Activated CD4-positive, alpha-beta T cell treated with anti-CD3 and anti-CD28 coated beads for 36 hours (primary cell): ENCODE measurements at regions of chr14 and their contacts with region 1.

Region 1: GRCh38 chr14:20413045-20413799 is at the start of gene TEP1:
- DNase-seq: peak; percentile 87
- ATAC-seq: peak; percentile 82
- H3K4me3 Mint-ChIP-seq: peak within 1 kb of the TSS; percentile 82
- H3K27ac Mint-ChIP-seq: peak within 1 kb of the TSS; percentile 94
- H3K4me1 Mint-ChIP-seq: peaks cover 37% of the 10 kb centered on the region
- H3K27me3 Mint-ChIP-seq: no peaks in the 10 kb centered on the region
- total RNA-seq, gene TEP1: 29.2 to 40.1 TPM

Region 2: DNA sequence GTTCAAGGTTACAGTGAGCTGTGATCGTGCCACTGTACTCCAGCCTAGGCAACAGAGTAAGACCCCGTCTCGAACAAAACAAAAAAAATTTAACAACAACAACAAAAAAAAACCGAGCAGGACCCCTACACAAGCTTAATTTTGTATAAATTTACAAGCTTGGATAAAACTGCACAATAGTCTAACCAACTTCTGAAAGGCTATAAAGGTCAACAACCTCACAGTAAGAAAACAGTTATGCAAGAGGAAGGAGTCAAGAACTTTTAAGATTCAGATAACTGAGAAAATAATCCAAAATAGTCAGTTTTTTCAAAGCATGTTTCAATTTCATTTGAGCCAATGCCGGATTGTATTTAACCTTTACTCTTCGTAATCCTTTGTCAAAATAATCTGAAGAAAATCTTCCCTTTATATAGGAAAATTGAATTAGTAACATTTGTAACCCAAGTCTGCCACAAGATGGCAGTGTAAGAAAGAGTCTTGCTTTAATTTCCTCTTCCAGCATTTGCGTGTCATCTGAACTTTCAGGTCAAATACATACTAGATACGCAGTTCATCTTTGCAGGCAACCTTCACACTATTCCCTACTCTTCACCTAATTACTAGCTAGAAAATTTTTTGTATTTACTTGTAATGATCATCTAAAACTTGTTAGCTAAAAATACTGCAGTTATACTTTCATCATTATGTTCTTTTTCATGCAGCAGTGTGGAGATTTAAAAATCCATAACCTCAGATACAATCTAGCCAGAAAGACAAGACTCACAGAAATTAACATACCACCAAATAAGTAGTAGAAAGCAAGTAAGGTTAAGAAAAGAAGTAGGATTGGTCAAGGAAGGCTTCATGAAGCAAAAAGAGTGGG is 86.0 kb before region 1 on chr14:
- CTCF ChIA-PET with region 1: interaction called, 19 read pairs
- POLR2A ChIA-PET with region 1: no interaction called
- intact Hi-C with region 1: loop called (anchors 1 to 2 kb)
- DNase-seq: no peak
- ATAC-seq: peak; percentile 71
- H3K4me3 Mint-ChIP-seq: no peak overlapping the region
- H3K27ac Mint-ChIP-seq: peak overlapping the region; percentile 44
- H3K4me1 Mint-ChIP-seq: peaks cover 37% of the 10 kb centered on the region
- H3K27me3 Mint-ChIP-seq: no peaks in the 10 kb centered on the region

Region 3: DNA sequence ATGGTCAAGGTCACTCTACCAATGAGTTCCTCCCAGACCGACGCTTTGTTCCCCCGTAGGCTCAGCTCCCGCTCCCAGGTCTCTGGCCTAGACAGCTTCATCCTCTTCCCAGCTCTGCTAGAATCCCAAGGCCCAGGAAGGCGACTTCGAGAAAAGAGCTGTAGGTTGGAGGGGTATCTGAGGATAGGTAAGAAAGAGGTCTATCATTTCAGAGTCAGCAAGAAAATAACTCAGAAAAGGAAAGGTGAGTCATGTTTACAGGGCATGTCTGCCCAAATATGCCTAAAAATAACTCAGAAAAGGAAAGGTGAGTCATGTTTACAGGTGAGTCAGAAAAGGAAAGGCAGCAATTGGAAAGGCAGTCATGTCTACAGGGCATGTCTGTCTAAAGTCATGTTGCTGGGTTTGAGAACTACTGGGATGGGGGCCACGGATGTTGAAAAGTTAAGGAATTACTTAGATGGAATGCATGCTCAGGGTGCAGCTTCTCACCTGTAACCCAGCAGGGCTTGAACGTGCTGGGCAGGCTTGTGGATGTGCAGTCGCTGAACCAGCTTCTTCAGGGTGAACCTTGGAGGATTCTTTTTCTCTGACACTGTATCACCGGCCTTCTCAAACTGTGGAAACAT is 12.1 kb before region 1 on chr14:
- CTCF ChIA-PET with region 1: interaction called, 30 read pairs
- POLR2A ChIA-PET with region 1: no interaction called
- intact Hi-C with region 1: loop called (anchors 1 kb)
- DNase-seq: peak; percentile 37
- ATAC-seq: peak; percentile 95
- H3K4me3 Mint-ChIP-seq: peak overlapping the region; percentile 29
- H3K27ac Mint-ChIP-seq: peak overlapping the region; percentile 88
- H3K4me1 Mint-ChIP-seq: peaks cover 34% of the 10 kb centered on the region
- H3K27me3 Mint-ChIP-seq: no peaks in the 10 kb centered on the region

Region 4: GRCh38 chr14:20429801-20430669 is 16.8 kb after region 1 on chr14:
- CTCF ChIA-PET with region 1: interaction called, 39 read pairs
- POLR2A ChIA-PET with region 1: no interaction called
- intact Hi-C with region 1: no loop called
- DNase-seq: no peak
- ATAC-seq: no peak
- H3K4me3 Mint-ChIP-seq: no peak overlapping the region
- H3K27ac Mint-ChIP-seq: peak overlapping the region; percentile 6
- H3K4me1 Mint-ChIP-seq: peaks cover 28% of the 10 kb centered on the region
- H3K27me3 Mint-ChIP-seq: no peaks in the 10 kb centered on the region

Region 5: GRCh38 chr14:20461274-20462001 is 48.2 kb after region 1 on chr14 and contains the start of gene PIP4P1:
- CTCF ChIA-PET with region 1: interaction called, 10 read pairs
- POLR2A ChIA-PET with region 1: interaction called, 8 read pairs
- intact Hi-C with region 1: loop called in 1 of 2 experiments (anchors 1 kb)
- DNase-seq: peak; percentile 99
- ATAC-seq: peak; percentile 95
- H3K4me3 Mint-ChIP-seq: peak within 1 kb of the TSS; percentile 84
- H3K27ac Mint-ChIP-seq: peak within 1 kb of the TSS; percentile 96
- H3K4me1 Mint-ChIP-seq: peaks cover 26% of the 10 kb centered on the region
- H3K27me3 Mint-ChIP-seq: no peaks in the 10 kb centered on the region
- total RNA-seq, gene PIP4P1: 24.2 to 24.7 TPM

Region 6: GRCh38 chr14:20624495-20625070 is 211.4 kb after region 1 on chr14:
- CTCF ChIA-PET with region 1: no interaction called
- POLR2A ChIA-PET with region 1: no interaction called
- intact Hi-C with region 1: no loop called
- DNase-seq: peak; percentile 67
- ATAC-seq: peak; percentile 34
- H3K4me3 Mint-ChIP-seq: peak overlapping the region; percentile 71
- H3K27ac Mint-ChIP-seq: peak overlapping the region; percentile 84
- H3K4me1 Mint-ChIP-seq: peaks cover 68% of the 10 kb centered on the region
- H3K27me3 Mint-ChIP-seq: peaks cover 31% of the 10 kb centered on the region